CD4-positive, alpha-beta T cell (primary cell): ENCODE measurements at regions of chr3 and their contacts with region 1.

Region 1: GRCh38 chr3:71456156-71456555 is 127.4 kb downstream of the FOXP1 start:
- DNase-seq: peak in 4 of 14 experiments; percentile 49 to 64 (median 63)
- ATAC-seq: peak; percentile 37
- H3K4me3 ChIP-seq: peak overlapping the region; percentile 25
- H3K4me3 Mint-ChIP-seq: peak overlapping the region; percentile 78
- H3K27ac ChIP-seq: peak overlapping the region; percentile 72 to 78
- H3K27ac Mint-ChIP-seq: peak overlapping the region; percentile 94
- H3K4me1 ChIP-seq: peaks cover 54% of the 10 kb centered on the region
- H3K4me1 Mint-ChIP-seq: peaks cover 95% of the 10 kb centered on the region
- H3K27me3 ChIP-seq: no peaks in the 10 kb centered on the region
- H3K27me3 Mint-ChIP-seq: no peaks in the 10 kb centered on the region
- CTCF ChIP-seq: peak; percentile 46

Region 2: GRCh38 chr3:71050538-71051258 is 405.5 kb before region 1 on chr3:
- CTCF ChIA-PET with region 1: no interaction called
- POLR2A ChIA-PET with region 1: no interaction called
- intact Hi-C with region 1: no loop called
- DNase-seq: peak in 7 of 14 experiments; percentile 13 to 87 (median 54)
- ATAC-seq: peak; percentile 92
- H3K4me3 ChIP-seq: no peak overlapping the region
- H3K4me3 Mint-ChIP-seq: peak overlapping the region; percentile 55
- H3K27ac ChIP-seq: peak overlapping the region; percentile 6 to 73
- H3K27ac Mint-ChIP-seq: no peak overlapping the region
- H3K4me1 ChIP-seq: peaks cover 61% of the 10 kb centered on the region
- H3K4me1 Mint-ChIP-seq: peaks cover 100% of the 10 kb centered on the region
- H3K27me3 ChIP-seq: no peaks in the 10 kb centered on the region
- H3K27me3 Mint-ChIP-seq: no peaks in the 10 kb centered on the region
- CTCF ChIP-seq: no peak

Region 3: DNA sequence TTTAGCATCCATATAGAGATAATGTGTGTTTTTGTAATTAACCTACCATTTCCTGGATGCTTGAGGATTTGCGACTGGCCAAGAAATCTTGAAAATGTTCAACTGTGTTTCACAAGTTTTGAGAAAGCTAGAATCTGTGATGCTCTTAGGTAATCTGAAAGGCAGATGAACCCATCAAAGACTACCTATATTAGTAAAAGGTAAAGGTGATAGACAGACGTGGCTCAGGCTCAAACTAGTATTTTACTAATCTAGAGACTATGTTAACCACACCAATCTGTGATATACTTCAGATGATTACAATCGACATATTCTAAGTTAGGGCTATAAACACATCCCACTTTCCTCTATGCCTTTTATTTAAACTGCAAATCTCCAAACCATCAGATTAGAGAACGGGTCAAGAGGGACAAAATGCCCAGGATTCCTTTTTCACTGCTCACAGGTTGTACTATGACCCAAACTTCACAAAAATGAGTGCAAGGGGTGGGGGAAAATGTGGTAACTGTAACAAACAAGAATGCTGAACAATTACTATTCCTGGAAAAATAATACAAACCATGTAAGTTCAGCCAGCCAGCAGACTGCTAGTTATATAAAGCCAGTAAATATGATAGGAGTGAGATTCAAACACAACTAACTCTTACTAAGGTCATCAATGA is 167.8 kb before region 1 on chr3:
- CTCF ChIA-PET with region 1: no interaction called
- POLR2A ChIA-PET with region 1: no interaction called
- intact Hi-C with region 1: no loop called
- DNase-seq: no peak
- ATAC-seq: no peak
- H3K4me3 ChIP-seq: no peak overlapping the region
- H3K4me3 Mint-ChIP-seq: no peak overlapping the region
- H3K27ac ChIP-seq: no peak overlapping the region
- H3K27ac Mint-ChIP-seq: peak overlapping the region; percentile 28
- H3K4me1 ChIP-seq: no peaks in the 10 kb centered on the region
- H3K4me1 Mint-ChIP-seq: peaks cover 72% of the 10 kb centered on the region
- H3K27me3 ChIP-seq: no peaks in the 10 kb centered on the region
- H3K27me3 Mint-ChIP-seq: no peaks in the 10 kb centered on the region
- CTCF ChIP-seq: no peak

Region 4: GRCh38 chr3:71416876-71417275 is 39.3 kb before region 1 on chr3:
- CTCF ChIA-PET with region 1: interaction called, 3 read pairs
- POLR2A ChIA-PET with region 1: interaction called, 3 read pairs
- intact Hi-C with region 1: loop called in 1 of 2 experiments (anchors 5 kb)
- DNase-seq: peak in 8 of 14 experiments; percentile 12 to 75 (median 52)
- ATAC-seq: peak; percentile 68
- H3K4me3 ChIP-seq: no peak overlapping the region
- H3K4me3 Mint-ChIP-seq: peak overlapping the region; percentile 70
- H3K27ac ChIP-seq: peak overlapping the region in 1 of 2 donors; percentile 42
- H3K27ac Mint-ChIP-seq: peak overlapping the region; percentile 91
- H3K4me1 ChIP-seq: peaks cover 45% of the 10 kb centered on the region
- H3K4me1 Mint-ChIP-seq: peaks cover 94% of the 10 kb centered on the region
- H3K27me3 ChIP-seq: no peaks in the 10 kb centered on the region
- H3K27me3 Mint-ChIP-seq: no peaks in the 10 kb centered on the region
- CTCF ChIP-seq: peak; percentile 40

Region 5: DNA sequence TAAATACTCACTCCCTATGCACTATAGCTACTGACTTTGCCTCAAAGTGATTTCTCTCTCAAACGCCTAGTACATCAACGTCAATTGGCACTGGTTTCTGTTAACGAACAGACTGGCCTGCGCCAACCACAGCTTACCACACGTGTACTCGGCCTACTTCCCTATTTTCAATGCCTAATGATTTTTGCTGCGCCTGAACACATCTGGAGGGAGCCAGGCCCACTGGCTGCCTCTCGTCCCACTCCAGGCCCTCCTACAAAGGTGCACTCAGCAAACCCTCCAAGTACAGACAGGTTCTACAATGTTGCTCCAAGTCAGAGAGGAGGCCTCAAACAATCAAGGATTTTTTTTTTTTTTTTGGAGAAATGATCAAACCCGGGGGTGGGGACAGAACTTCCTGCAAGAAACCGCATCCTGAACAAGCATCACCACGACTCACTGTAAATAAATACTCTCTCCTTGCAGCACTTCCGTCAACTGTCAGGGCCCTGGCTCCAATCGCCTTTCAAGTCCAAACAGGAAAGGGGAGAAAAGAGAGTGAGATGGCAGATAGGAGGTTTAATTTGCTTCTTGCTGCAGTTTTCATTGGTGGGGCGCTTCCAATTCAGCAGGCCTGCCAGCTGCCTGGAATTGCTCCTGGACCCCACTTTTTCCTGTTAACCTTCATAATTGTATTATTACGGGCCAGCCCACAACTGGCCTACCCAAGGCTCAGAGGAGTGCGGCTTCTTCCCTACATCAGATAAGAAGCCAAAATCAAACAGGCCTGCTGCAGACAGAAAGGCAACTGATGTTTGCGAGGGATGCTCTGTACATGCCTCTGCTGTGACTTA is 11.9 kb before region 1 on chr3:
- CTCF ChIA-PET with region 1: interaction called, 19 read pairs
- POLR2A ChIA-PET with region 1: interaction called, 100 read pairs
- intact Hi-C with region 1: loop called in 1 of 2 experiments (anchors 1 kb)
- DNase-seq: peak; percentile 53 to 95 (median 68)
- ATAC-seq: peak; percentile 78
- H3K4me3 ChIP-seq: no peak overlapping the region
- H3K4me3 Mint-ChIP-seq: peak overlapping the region; percentile 79
- H3K27ac ChIP-seq: peak overlapping the region; percentile 67 to 82
- H3K27ac Mint-ChIP-seq: peak overlapping the region; percentile 94
- H3K4me1 ChIP-seq: peaks cover 97% of the 10 kb centered on the region
- H3K4me1 Mint-ChIP-seq: peaks cover 97% of the 10 kb centered on the region
- H3K27me3 ChIP-seq: no peaks in the 10 kb centered on the region
- H3K27me3 Mint-ChIP-seq: no peaks in the 10 kb centered on the region
- CTCF ChIP-seq: no peak

Region 6: GRCh38 chr3:71478568-71478967 is 22.4 kb after region 1 on chr3:
- CTCF ChIA-PET with region 1: interaction called, 3 read pairs
- POLR2A ChIA-PET with region 1: interaction called, 13 read pairs
- intact Hi-C with region 1: loop called (anchors 2 kb)
- DNase-seq: peak in 11 of 14 experiments; percentile 36 to 78 (median 61)
- ATAC-seq: peak; percentile 85
- H3K4me3 ChIP-seq: no peak overlapping the region
- H3K4me3 Mint-ChIP-seq: peak overlapping the region; percentile 75
- H3K27ac ChIP-seq: no peak overlapping the region
- H3K27ac Mint-ChIP-seq: peak overlapping the region; percentile 95
- H3K4me1 ChIP-seq: peaks cover 47% of the 10 kb centered on the region
- H3K4me1 Mint-ChIP-seq: peaks cover 92% of the 10 kb centered on the region
- H3K27me3 ChIP-seq: no peaks in the 10 kb centered on the region
- H3K27me3 Mint-ChIP-seq: no peaks in the 10 kb centered on the region
- CTCF ChIP-seq: no peak

Region 7: GRCh38 chr3:71487418-71487817 is 31.3 kb after region 1 on chr3:
- CTCF ChIA-PET with region 1: interaction called, 10 read pairs
- POLR2A ChIA-PET with region 1: interaction called, 37 read pairs
- intact Hi-C with region 1: loop called in 1 of 2 experiments (anchors 2 kb)
- DNase-seq: peak in 2 of 14 experiments; percentile 43 to 65
- ATAC-seq: no peak
- H3K4me3 ChIP-seq: peak overlapping the region; percentile 28
- H3K4me3 Mint-ChIP-seq: peak overlapping the region; percentile 84
- H3K27ac ChIP-seq: peak overlapping the region; percentile 78 to 88
- H3K27ac Mint-ChIP-seq: peak overlapping the region; percentile 95
- H3K4me1 ChIP-seq: peaks cover 72% of the 10 kb centered on the region
- H3K4me1 Mint-ChIP-seq: peaks cover 94% of the 10 kb centered on the region
- H3K27me3 ChIP-seq: no peaks in the 10 kb centered on the region
- H3K27me3 Mint-ChIP-seq: no peaks in the 10 kb centered on the region
- CTCF ChIP-seq: no peak

Region 8: DNA sequence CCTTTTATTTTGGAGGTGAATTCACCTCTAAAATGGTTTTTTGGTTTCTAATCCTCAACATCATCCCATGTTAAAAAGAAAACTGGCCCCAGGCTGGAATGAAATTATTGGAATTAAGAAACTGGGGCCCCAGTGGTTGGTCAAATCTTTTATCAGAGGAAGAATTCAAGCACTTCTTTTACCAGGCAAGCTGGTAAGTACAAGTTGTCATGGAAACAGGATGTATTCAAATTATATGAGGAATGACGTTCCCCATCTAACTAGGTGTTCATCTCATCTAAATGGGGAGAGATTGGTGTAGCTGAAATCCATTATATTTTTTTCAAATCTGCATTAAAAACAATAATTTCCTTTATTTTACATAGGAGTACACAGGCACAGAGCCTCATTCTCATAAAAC is 278.7 kb after region 1 on chr3:
- CTCF ChIA-PET with region 1: no interaction called
- POLR2A ChIA-PET with region 1: no interaction called
- intact Hi-C with region 1: no loop called
- DNase-seq: no peak
- ATAC-seq: no peak
- H3K4me3 ChIP-seq: no peak overlapping the region
- H3K4me3 Mint-ChIP-seq: no peak overlapping the region
- H3K27ac ChIP-seq: no peak overlapping the region
- H3K27ac Mint-ChIP-seq: no peak overlapping the region
- H3K4me1 ChIP-seq: peaks cover 7% of the 10 kb centered on the region
- H3K4me1 Mint-ChIP-seq: peaks cover 14% of the 10 kb centered on the region
- H3K27me3 ChIP-seq: no peaks in the 10 kb centered on the region
- H3K27me3 Mint-ChIP-seq: no peaks in the 10 kb centered on the region
- CTCF ChIP-seq: no peak

Region 9: DNA sequence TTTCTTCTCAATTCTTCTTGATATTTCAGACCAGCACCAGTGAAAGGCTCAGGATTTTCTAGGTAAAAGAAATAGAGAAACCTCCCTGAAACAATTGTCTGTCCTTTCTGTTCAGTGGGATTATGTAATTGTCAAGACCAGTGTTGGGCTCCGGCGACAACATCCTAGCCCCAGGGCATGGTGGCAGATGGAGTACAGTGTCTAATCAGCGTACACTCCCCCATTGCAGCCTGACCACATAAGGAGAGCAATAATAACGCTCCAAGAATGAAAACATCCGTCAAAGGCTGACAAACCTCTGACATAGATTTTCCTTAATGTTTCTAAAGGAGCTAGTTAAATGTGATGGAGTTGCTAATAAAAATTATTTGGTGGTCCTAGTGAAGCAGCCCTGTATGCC is 1749.9 kb after region 1 on chr3:
- CTCF ChIA-PET with region 1: no interaction called
- POLR2A ChIA-PET with region 1: no interaction called
- intact Hi-C with region 1: no loop called
- DNase-seq: no peak
- ATAC-seq: no peak
- H3K4me3 ChIP-seq: no peak overlapping the region
- H3K4me3 Mint-ChIP-seq: no peak overlapping the region
- H3K27ac ChIP-seq: no peak overlapping the region
- H3K27ac Mint-ChIP-seq: no peak overlapping the region
- H3K4me1 ChIP-seq: no peaks in the 10 kb centered on the region
- H3K4me1 Mint-ChIP-seq: no peaks in the 10 kb centered on the region
- H3K27me3 ChIP-seq: no peaks in the 10 kb centered on the region
- H3K27me3 Mint-ChIP-seq: peaks cover 5% of the 10 kb centered on the region
- CTCF ChIP-seq: no peak